Posterior cingulate gyrus (tissue), 11 donors: ENCODE measurements at regions of chr5 and their contacts with region 1.

Region 1: GRCh38 chr5:91101600-91102379 is 281.3 kb downstream of the ARRDC3 start:
- DNase-seq: peak in 9 of 10 donors; percentile 12 to 95 (median 65)

Region 2: DNA sequence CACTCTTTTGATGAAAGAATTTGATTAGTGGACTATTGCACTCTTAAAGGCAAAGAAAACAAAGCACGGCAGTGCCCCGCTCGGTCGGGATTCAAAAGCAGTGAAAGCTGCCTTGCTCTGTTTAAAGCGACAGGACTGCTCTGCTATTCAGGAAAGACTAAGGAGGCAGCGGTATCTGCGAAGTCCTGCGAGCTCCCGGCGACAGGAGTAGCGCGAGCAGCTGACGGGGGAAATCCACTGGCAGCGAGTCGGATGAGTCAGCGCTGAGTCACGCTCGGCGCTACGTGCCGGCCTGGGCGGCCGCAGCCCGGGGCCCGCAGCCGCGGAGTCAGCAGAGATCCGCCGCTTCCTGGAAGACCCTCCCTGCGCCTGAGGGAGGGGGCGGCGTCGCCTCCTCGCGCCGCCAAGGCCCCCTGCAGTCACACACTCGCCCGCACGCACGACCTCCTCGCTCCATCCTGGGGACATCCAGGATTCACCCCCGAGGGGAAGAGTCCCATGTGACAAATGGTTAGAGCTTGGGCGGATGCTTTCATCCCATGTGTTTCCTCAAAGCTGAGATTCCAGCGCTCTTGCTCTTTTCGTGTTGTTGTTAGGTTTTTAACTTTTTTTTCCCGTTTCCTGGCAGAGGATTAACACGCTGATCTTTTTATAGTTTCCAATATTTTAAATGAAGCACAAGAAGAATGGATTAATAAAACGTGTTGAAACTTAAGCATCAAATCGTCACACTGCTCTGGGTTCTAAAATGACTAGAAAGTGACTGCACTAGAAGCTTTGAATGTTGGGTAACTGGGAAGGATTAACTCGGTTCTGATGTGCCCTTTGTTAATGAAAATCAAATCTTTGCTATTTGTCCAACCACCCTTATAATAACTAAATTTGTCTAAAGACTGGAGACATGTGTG is 178.8 kb after region 1 on chr5:
- intact Hi-C with region 1: loop called (anchors 5 kb)
- DNase-seq: peak; percentile 83 to 99 (median 91)